Heart left ventricle (tissue), 16 donors: ENCODE measurements at regions of chr5 and their contacts with region 1.

Region 1: DNA sequence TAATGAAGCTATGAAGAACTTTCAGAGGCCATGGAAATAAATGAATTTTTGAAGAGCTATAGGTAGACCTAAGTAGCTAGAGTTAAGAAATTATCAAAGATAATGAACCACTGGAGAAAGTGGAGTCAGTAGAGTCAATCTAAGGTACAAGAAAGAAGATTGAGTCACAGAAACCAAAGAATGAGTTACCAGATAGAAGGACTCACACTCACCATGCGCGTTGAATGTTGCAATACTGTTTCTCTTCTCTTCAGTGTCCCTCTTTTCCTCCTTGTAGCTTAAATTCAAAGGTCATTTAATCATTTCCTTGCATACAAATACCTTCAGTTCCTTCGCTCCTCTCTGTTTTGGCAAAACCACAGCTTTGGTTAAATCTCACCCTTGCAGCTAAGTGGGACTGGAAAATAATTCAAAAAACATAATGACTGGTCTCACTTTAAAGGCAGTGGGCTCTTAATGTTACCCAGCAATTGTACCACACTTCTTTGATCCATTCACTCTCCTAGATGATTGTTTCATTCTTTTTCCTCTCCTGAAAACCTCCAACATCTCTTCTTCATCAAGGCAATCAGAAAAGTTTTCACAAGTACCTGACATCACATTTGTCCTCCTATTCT is 58.3 kb downstream of the NIPBL start:
- DNase-seq: no peak
- ATAC-seq: no peak
- H3K4me3 ChIP-seq: no peak overlapping the region
- H3K27ac ChIP-seq: no peak overlapping the region
- H3K4me1 ChIP-seq: peaks cover 0 to 59% (median 33%) of the 10 kb centered on the region in 12 donors
- H3K27me3 ChIP-seq: no peaks in the 10 kb centered on the region
- CTCF ChIP-seq: no peak
- POLR2A ChIP-seq: no peak

Region 2: GRCh38 chr5:36763454-36763853 is 171.4 kb before region 1 on chr5:
- intact Hi-C with region 1: no loop called
- DNase-seq: no peak
- ATAC-seq: no peak
- H3K4me3 ChIP-seq: no peak overlapping the region
- H3K27ac ChIP-seq: no peak overlapping the region
- H3K4me1 ChIP-seq: no peaks in the 10 kb centered on the region
- H3K27me3 ChIP-seq: no peaks in the 10 kb centered on the region
- CTCF ChIP-seq: no peak
- POLR2A ChIP-seq: no peak

Region 3: GRCh38 chr5:36885566-36886485 is 49.0 kb before region 1 on chr5:
- intact Hi-C with region 1: loop called in 1 of 10 experiments (anchors 5 kb)
- DNase-seq: peak in 2 of 5 donors; percentile 23 to 64
- ATAC-seq: no peak
- H3K4me3 ChIP-seq: no peak overlapping the region
- H3K27ac ChIP-seq: no peak overlapping the region
- H3K4me1 ChIP-seq: peaks cover 3 to 83% (median 59%) of the 10 kb centered on the region in 12 donors
- H3K27me3 ChIP-seq: no peaks in the 10 kb centered on the region
- CTCF ChIP-seq: no peak
- POLR2A ChIP-seq: no peak

Region 4: GRCh38 chr5:36897616-36898015 is 37.2 kb before region 1 on chr5:
- intact Hi-C with region 1: loop called in 1 of 10 experiments (anchors 5 kb)
- DNase-seq: no peak
- ATAC-seq: peak in 1 of 4 donors; percentile 47
- H3K4me3 ChIP-seq: no peak overlapping the region
- H3K27ac ChIP-seq: no peak overlapping the region
- H3K4me1 ChIP-seq: peaks cover 0 to 57% (median 48%) of the 10 kb centered on the region in 12 donors
- H3K27me3 ChIP-seq: no peaks in the 10 kb centered on the region
- CTCF ChIP-seq: no peak
- POLR2A ChIP-seq: no peak